Aorta (tissue), 5 donors: ENCODE measurements at regions of chr15 and their contacts with region 1.

Region 1: DNA sequence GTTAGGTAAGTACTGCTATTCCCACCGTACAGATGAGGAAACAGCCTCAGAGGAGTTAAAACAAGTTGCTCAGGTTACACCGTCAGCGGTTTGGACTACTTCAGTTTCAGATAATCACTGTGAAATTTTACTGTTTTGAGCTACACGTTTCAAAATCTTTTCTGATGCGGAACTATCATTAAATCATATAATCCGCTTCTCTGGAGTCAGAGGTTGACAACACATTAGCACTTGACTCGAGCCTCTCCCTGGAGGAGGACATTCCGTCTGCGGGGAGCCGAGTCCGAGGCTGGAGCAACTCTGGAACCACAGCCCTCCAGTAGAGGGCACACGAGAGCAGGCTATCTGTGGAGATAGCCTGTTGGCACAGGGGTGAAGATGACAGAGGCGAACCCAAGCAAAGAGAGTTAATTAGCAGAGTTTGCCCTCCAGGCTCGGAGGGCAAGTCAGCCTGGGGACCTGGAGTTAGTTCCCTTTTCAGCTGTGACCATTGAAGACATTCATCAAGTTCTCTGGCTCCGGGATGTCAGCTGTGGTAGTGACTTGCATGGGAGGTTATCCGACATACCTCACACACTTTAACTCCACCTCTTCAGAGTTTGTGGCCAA is 131.2 kb downstream of the IGF1R start:
- DNase-seq: peak; percentile 84 to 94
- ATAC-seq: peak; percentile 90
- H3K4me3 ChIP-seq: no peak overlapping the region
- H3K27ac ChIP-seq: peak overlapping the region in 1 of 2 donors; percentile 17
- H3K4me1 ChIP-seq: peaks cover 0 to 5% of the 10 kb centered on the region in 2 donors
- H3K27me3 ChIP-seq: no peaks in the 10 kb centered on the region

Region 2: DNA sequence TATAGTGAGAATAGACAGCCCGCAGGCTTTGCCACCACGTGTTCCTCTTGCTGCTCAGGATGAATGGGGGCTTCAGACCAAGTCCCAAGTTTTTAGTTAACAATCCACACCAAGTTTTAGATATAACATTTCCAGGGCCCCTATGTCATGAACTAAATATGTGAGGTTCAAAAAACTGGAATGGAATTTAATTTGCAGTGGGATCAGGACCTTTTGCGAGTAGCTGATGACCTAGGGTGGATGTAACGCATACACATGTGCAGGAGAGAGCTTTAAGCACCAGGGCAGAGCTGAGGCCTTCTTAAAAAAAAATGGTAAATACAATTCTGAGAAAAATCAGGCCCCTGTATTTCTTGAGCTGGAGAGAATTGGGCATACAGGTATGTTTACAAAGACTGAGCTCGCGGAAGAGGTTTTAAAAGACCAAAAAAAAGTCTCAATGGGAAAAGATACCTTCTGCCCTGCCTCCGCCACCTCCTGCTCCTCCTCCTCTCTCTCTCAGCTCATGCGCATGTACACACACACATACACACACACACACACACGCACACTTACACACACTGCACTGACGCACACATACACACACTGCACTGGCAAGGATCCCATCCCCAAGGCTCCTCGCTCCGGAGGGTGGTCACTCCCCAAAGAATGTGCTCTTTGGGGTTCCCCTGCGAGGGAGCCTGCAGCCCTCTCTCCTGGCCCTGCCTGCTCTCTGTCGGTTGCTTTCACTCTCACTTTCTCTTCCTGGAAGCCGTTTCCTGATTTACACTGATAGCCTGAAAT is 179.5 kb before region 1 on chr15:
- intact Hi-C with region 1: no loop called
- DNase-seq: no peak
- ATAC-seq: peak; percentile 86
- H3K4me3 ChIP-seq: peak overlapping the region; percentile 57 to 67
- H3K27ac ChIP-seq: no peak overlapping the region
- H3K4me1 ChIP-seq: no peaks in the 10 kb centered on the region
- H3K27me3 ChIP-seq: no peaks in the 10 kb centered on the region

Region 3: GRCh38 chr15:98658831-98659699 is 120.5 kb before region 1 on chr15:
- intact Hi-C with region 1: loop called (anchors 5 kb)
- DNase-seq: no peak
- ATAC-seq: peak; percentile 87
- H3K4me3 ChIP-seq: no peak overlapping the region
- H3K27ac ChIP-seq: peak overlapping the region in 1 of 2 donors; percentile 26
- H3K4me1 ChIP-seq: peaks cover 2 to 3% of the 10 kb centered on the region in 2 donors
- H3K27me3 ChIP-seq: no peaks in the 10 kb centered on the region

Region 4: GRCh38 chr15:99014803-99015676 is 235.5 kb after region 1 on chr15:
- intact Hi-C with region 1: no loop called
- DNase-seq: peak; percentile 75 to 88
- ATAC-seq: peak; percentile 86
- H3K4me3 ChIP-seq: peak overlapping the region; percentile 42
- H3K27ac ChIP-seq: no peak overlapping the region
- H3K4me1 ChIP-seq: no peaks in the 10 kb centered on the region
- H3K27me3 ChIP-seq: no peaks in the 10 kb centered on the region